ENCODE measurements at regions of chr19 and their contacts with region 1.

Region 1: GRCh38 chr19:32607479-32607878 is 26.5 kb downstream of the PDCD5 start:
- DNase-seq: no peak
- ATAC-seq: no peak
- H3K4me3 ChIP-seq: no peak overlapping the region
- H3K27ac ChIP-seq: no peak overlapping the region
- H3K4me1 ChIP-seq: no peaks in the 10 kb centered on the region
- H3K27me3 ChIP-seq: no peaks in the 10 kb centered on the region
- CTCF ChIP-seq: no peak
- POLR2A ChIP-seq: no peak
- RAD21 ChIP-seq: no peak

Region 2: DNA sequence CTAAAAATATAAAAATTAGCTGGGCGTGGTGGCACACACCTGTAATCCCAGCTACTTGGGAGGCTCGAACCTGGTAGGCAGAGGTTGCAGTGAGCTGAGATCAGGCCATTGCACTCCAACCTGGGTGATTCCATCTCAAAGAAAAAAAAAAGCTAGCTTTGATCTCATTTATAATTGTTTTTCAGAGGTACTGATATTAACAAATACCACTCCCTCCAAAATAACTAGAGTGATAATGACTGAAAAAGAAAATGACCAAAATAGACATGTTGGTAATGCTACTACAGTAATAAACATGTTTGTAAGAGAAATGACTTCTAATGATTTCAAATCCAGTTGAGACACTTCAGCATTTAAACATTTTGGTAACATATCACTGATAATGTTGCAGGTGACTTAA is 13.5 kb before region 1 on chr19:
- CTCF ChIA-PET with region 1: no interaction called
- POLR2A ChIA-PET with region 1: no interaction called
- RAD21 ChIA-PET with region 1: no interaction called
- intact Hi-C with region 1: no loop called
- DNase-seq: no peak
- ATAC-seq: no peak
- H3K4me3 ChIP-seq: no peak overlapping the region
- H3K27ac ChIP-seq: no peak overlapping the region
- H3K4me1 ChIP-seq: no peaks in the 10 kb centered on the region
- H3K27me3 ChIP-seq: no peaks in the 10 kb centered on the region
- CTCF ChIP-seq: no peak
- POLR2A ChIP-seq: no peak
- RAD21 ChIP-seq: no peak

Region 3: DNA sequence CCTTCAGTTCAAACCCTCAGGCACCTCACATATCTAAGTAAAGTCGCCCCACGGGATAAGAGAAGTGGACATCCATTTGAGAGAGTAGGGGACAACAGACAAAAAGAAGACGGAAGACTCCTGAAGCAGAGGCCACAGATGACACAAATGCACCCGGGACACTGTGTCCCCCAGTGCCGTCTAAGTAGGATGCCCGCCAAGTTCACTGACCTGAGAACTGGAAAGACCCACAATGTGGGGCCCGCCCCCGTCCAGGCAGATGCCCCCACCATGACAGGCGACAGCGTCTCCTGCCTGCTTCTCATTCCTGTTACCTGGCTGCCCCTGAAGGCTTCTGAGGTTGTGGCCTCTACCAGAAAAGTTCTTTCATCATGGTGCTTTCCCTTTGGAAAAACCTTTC is 50.6 kb after region 1 on chr19:
- CTCF ChIA-PET with region 1: no interaction called
- POLR2A ChIA-PET with region 1: no interaction called
- RAD21 ChIA-PET with region 1: no interaction called
- intact Hi-C with region 1: loop called (anchors 5 kb)
- DNase-seq: no peak
- ATAC-seq: no peak
- H3K4me3 ChIP-seq: no peak overlapping the region
- H3K27ac ChIP-seq: no peak overlapping the region
- H3K4me1 ChIP-seq: peaks cover 2 to 4% of the 10 kb centered on the region in 2 experiments; a peak in 3 of 4 replicates
- H3K27me3 ChIP-seq: no peaks in the 10 kb centered on the region
- CTCF ChIP-seq: no peak
- POLR2A ChIP-seq: no peak
- RAD21 ChIP-seq: no peak